HAP-1 (cell line): ENCODE measurements at regions of chr17 and their contacts with region 1.

Region 1: DNA sequence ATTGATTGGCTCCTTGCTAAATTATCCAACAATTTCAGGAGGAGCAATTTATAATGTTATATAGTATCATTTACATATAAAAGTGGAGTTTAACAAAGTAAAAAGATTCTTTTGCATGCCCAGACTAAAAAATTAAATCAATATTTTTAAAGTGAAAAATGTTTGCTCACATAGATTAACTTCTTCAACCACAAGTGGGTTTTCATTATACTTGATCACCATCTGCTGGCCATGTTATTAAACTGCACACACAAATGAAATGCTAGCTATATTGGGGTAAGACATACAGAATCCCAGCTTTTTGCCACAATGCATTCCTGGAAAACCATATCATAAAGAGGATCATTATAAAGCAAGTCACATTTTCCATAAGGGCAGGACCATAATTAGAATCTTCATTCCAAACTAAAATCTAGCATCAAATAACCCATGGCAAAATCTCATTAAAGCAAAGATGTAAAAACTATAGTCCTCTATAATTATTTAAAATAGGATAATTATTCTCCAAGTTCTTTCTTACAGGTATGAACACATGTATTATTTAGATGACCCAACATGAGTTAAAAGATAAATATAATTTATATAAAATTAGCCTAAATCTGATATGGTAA is 26.3 kb downstream of the CEP112 start:
- DNase-seq: peak; percentile 13 to 58
- H3K4me3 ChIP-seq: no peak overlapping the region
- H3K4me1 ChIP-seq: no peaks in the 10 kb centered on the region
- H3K27me3 ChIP-seq: no peaks in the 10 kb centered on the region

Region 2: GRCh38 chr17:65294179-65294720 is 871.4 kb before region 1 on chr17:
- in situ Hi-C with region 1: loop called (anchors 25 kb)
- DNase-seq: peak; percentile 49 to 72
- H3K4me3 ChIP-seq: no peak overlapping the region
- H3K4me1 ChIP-seq: no peaks in the 10 kb centered on the region
- H3K27me3 ChIP-seq: no peaks in the 10 kb centered on the region

Region 3: GRCh38 chr17:65561394-65562205 is 604.0 kb before region 1 on chr17 and contains the start of gene AXIN2:
- in situ Hi-C with region 1: loop called (anchors 25 kb)
- DNase-seq: peak; percentile 82 to 93
- H3K4me3 ChIP-seq: peak within 1 kb of the TSS; percentile 59
- H3K4me1 ChIP-seq: peaks cover 7% of the 10 kb centered on the region
- H3K27me3 ChIP-seq: no peaks in the 10 kb centered on the region

Region 4: DNA sequence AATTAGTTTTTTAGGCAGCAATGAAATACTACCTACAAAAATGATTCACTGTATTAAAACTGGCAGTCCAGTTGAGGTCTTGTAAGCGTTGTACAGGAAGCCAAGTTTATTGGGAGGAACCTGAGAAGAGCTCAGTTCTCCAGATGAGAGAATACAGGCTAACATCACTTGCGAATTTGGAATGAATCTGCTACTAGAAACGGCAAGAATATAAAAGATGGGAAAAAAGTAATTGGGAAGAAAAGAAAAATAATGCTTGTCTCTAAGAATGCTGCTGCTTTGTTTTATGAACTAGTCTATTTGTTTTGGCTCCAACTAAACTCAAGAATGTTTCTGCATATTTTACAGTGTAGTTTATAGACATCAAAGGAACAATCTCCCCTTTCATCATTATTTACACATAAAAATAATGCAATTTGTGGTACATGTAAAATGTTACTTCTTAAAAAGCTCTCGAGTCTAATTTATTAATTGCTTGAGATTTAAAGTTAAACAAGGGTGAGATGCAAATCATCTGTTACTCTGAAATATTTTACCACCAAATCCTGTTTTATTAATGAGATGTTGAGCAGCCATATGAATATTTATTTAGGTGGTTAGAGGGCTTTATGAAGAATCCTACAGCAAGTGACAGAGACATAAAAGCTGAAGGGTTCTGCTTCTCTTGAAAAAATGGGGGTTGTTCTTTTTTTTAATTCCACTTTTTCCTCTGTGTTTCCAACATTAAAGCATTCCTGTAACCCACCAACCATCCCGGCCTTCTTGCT is 442.1 kb before region 1 on chr17:
- in situ Hi-C with region 1: loop called (anchors 25 kb)
- DNase-seq: no peak
- H3K4me3 ChIP-seq: no peak overlapping the region
- H3K4me1 ChIP-seq: no peaks in the 10 kb centered on the region
- H3K27me3 ChIP-seq: no peaks in the 10 kb centered on the region